Activated CD4-positive, alpha-beta memory T cell treated with anti-CD3 and anti-CD28 coated beads, Interleukin-2, amount 10 ng/mL, durations not matched to agents 7 days and 5 days (primary cell): ENCODE measurements at regions of chr11 and their contacts with region 1.

Region 1: DNA sequence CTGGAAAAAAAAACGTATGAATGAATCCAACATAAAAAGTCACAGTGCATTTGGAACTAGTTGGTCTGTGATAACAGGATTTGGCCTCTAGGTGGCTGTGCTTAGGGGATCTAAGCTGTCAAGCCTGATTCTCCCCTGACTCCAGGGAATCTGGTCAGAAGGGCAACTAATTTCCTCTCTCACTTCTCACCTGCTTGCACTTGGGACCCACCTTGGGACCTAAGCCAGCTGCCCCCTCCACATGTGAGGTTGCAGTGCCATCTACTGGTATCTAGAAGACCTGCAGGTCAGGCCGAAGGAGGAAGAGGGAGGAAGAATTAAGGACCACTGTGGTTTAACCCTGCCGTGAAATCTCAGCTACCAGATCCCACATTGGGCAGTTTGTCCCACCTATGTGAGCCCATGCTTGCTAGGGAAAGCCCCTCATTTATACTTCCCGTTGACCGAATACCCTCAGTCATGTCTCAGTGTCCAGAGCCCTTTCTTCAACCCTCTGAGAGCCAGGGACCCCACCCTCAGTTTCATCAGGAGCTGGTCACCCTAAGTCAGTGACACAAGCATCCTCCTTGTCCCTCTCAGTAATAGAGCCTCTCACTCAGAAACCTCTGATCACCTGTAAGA is 33.2 kb upstream of the CAVIN3 start:
- DNase-seq: peak; percentile 62
- H3K4me3 Mint-ChIP-seq: no peak overlapping the region
- H3K27ac Mint-ChIP-seq: no peak overlapping the region
- H3K4me1 Mint-ChIP-seq: peaks cover 19% of the 10 kb centered on the region
- H3K27me3 Mint-ChIP-seq: no peaks in the 10 kb centered on the region

Region 2: GRCh38 chr11:6258571-6259081 is 94.9 kb before region 1 on chr11:
- CTCF ChIA-PET with region 1: interaction called, 117 read pairs
- POLR2A ChIA-PET with region 1: no interaction called
- DNase-seq: no peak
- H3K4me3 Mint-ChIP-seq: no peak overlapping the region
- H3K27ac Mint-ChIP-seq: no peak overlapping the region
- H3K4me1 Mint-ChIP-seq: peaks cover 3% of the 10 kb centered on the region
- H3K27me3 Mint-ChIP-seq: no peaks in the 10 kb centered on the region

Region 3: GRCh38 chr11:6298605-6299004 is 54.9 kb before region 1 on chr11:
- CTCF ChIA-PET with region 1: interaction called, 40 read pairs
- POLR2A ChIA-PET with region 1: no interaction called
- DNase-seq: peak; percentile 18
- H3K4me3 Mint-ChIP-seq: no peak overlapping the region
- H3K27ac Mint-ChIP-seq: no peak overlapping the region
- H3K4me1 Mint-ChIP-seq: no peaks in the 10 kb centered on the region
- H3K27me3 Mint-ChIP-seq: peaks cover 7% of the 10 kb centered on the region